ENCODE measurements at regions of chr2 and their contacts with region 1.

Region 1: DNA sequence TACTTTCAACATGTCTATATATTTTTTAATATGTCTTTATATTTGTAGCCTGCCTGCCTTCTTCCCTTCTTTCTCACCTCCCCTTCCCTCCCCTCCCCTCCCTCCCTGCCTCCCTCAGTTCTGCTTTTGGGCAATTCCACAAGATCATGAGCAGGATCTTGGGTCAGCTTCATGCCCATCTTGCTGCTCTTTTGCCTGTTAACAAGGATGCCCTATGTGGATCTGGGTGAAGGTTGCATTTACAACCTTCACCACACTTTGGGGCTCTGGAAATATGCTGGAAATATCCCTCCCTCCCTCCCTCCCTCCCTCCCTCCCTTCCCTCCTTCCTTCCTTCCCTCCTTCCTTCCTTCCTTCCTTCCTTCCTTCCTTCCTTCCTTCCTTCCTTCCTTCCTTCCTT is 334.1 kb upstream of the FAM98A start:
- DNase-seq: no peak
- ATAC-seq: no peak
- H3K4me3 ChIP-seq: no peak overlapping the region
- H3K27ac ChIP-seq: no peak overlapping the region
- H3K4me1 ChIP-seq: no peaks in the 10 kb centered on the region
- H3K27me3 ChIP-seq: no peaks in the 10 kb centered on the region
- CTCF ChIP-seq: no peak

Region 2: GRCh38 chr2:33877348-33878016 is 55.7 kb before region 1 on chr2:
- intact Hi-C with region 1: loop called in 1 of 2 experiments (anchors 2 kb)
- DNase-seq: no peak
- ATAC-seq: no peak
- H3K4me3 ChIP-seq: no peak overlapping the region
- H3K27ac ChIP-seq: no peak overlapping the region
- H3K4me1 ChIP-seq: no peaks in the 10 kb centered on the region
- H3K27me3 ChIP-seq: no peaks in the 10 kb centered on the region
- CTCF ChIP-seq: no peak

Measured in psoas muscle (tissue), 8 donors.